Activated T-helper 1 cell treated with anti-CD3 and anti-CD28 coated beads, Interleukin-12 subunit alpha, Interleukin-12 subunit beta, Interleukin-2, Interleukin-4 antibody, amounts not matched to agents 30 ng/mL and 10 ng/mL and 1 ng/mL, durations not matched to agents 14 hours and 24 hours and 36 hours (primary cell): ENCODE measurements at regions of chr4 and their contacts with region 1.

Region 1: GRCh38 chr4:89307446-89308160 is at the start of gene GPRIN3:
- DNase-seq: peak; percentile 58
- H3K4me3 Mint-ChIP-seq: peak within 1 kb of the TSS; percentile 95
- H3K27ac Mint-ChIP-seq: peak within 1 kb of the TSS; percentile 97
- H3K4me1 Mint-ChIP-seq: peaks cover 72% of the 10 kb centered on the region
- H3K27me3 Mint-ChIP-seq: no peaks in the 10 kb centered on the region
- total RNA-seq, gene GPRIN3: 37.1 and 39.0 TPM in 2 replicates

Region 2: GRCh38 chr4:89254847-89255246 is 52.8 kb before region 1 on chr4:
- intact Hi-C with region 1: loop called (anchors 2 kb)
- DNase-seq: peak; percentile 13
- H3K4me3 Mint-ChIP-seq: no peak overlapping the region
- H3K27ac Mint-ChIP-seq: peak overlapping the region; percentile 68
- H3K4me1 Mint-ChIP-seq: peaks cover 76% of the 10 kb centered on the region
- H3K27me3 Mint-ChIP-seq: no peaks in the 10 kb centered on the region